ENCODE measurements at regions of chr19 and their contacts with region 1.

Region 1: GRCh38 chr19:34772697-34773554 is at the start of gene ZNF599:
- DNase-seq: peak; percentile 85 to 89
- ATAC-seq: peak; percentile 99
- H3K4me3 ChIP-seq: peak within 1 kb of the TSS; percentile 72 to 97 (median 87)
- H3K27ac ChIP-seq: peak within 1 kb of the TSS; percentile 75 to 88 (median 82)
- H3K4me1 ChIP-seq: peaks cover 6 to 9% of the 10 kb centered on the region in 2 donors
- H3K27me3 ChIP-seq: peaks cover 0 to 3% (median 0%) of the 10 kb centered on the region in 3 donors
- CTCF ChIP-seq: peak in 1 of 5 experiments; percentile 13
- POLR2A ChIP-seq: peak; percentile 39 to 53
- total RNA-seq, gene ZNF599: 1.2 to 6.3 (median 2.4) TPM

Region 2: GRCh38 chr19:34722353-34722752 is 50.6 kb before region 1 on chr19:
- in situ Hi-C with region 1: no loop called
- intact Hi-C with region 1: no loop called
- DNase-seq: no peak
- ATAC-seq: no peak
- H3K4me3 ChIP-seq: no peak overlapping the region
- H3K27ac ChIP-seq: no peak overlapping the region
- H3K4me1 ChIP-seq: no peaks in the 10 kb centered on the region
- H3K27me3 ChIP-seq: peaks cover 0 to 2% (median 0%) of the 10 kb centered on the region in 3 donors
- CTCF ChIP-seq: no peak
- POLR2A ChIP-seq: no peak

Region 3: GRCh38 chr19:34733826-34734600 is 38.9 kb before region 1 on chr19 and contains the start of gene ZNF181:
- in situ Hi-C with region 1: no loop called
- intact Hi-C with region 1: loop called (anchors 1 kb)
- DNase-seq: peak; percentile 81 to 89
- ATAC-seq: peak; percentile 92 to 93
- H3K4me3 ChIP-seq: peak within 1 kb of the TSS; percentile 77 to 98 (median 86)
- H3K27ac ChIP-seq: peak within 1 kb of the TSS; percentile 96 to 100 (median 98)
- H3K4me1 ChIP-seq: peaks cover 30 to 34% of the 10 kb centered on the region in 2 donors
- H3K27me3 ChIP-seq: no peaks in the 10 kb centered on the region
- CTCF ChIP-seq: peak in 1 of 5 experiments; percentile 20
- POLR2A ChIP-seq: peak; percentile 3 to 57
- total RNA-seq, gene ZNF181: 27.3 to 77.9 (median 49.3) TPM